Heart left ventricle (tissue), 16 donors: ENCODE measurements at regions of chr3 and their contacts with region 1.

Region 1: GRCh38 chr3:20264934-20265567 is 79.0 kb upstream of the SGO1 start:
- DNase-seq: no peak
- ATAC-seq: no peak
- H3K4me3 ChIP-seq: no peak overlapping the region
- H3K27ac ChIP-seq: no peak overlapping the region
- H3K4me1 ChIP-seq: no peaks in the 10 kb centered on the region
- H3K27me3 ChIP-seq: no peaks in the 10 kb centered on the region
- CTCF ChIP-seq: no peak
- POLR2A ChIP-seq: no peak

Region 2: GRCh38 chr3:20280257-20280656 is 15.2 kb after region 1 on chr3:
- intact Hi-C with region 1: loop called in 1 of 10 experiments (anchors 1 kb)
- DNase-seq: no peak
- ATAC-seq: no peak
- H3K4me3 ChIP-seq: no peak overlapping the region
- H3K27ac ChIP-seq: no peak overlapping the region
- H3K4me1 ChIP-seq: no peaks in the 10 kb centered on the region
- H3K27me3 ChIP-seq: no peaks in the 10 kb centered on the region
- CTCF ChIP-seq: no peak
- POLR2A ChIP-seq: no peak

Region 3: DNA sequence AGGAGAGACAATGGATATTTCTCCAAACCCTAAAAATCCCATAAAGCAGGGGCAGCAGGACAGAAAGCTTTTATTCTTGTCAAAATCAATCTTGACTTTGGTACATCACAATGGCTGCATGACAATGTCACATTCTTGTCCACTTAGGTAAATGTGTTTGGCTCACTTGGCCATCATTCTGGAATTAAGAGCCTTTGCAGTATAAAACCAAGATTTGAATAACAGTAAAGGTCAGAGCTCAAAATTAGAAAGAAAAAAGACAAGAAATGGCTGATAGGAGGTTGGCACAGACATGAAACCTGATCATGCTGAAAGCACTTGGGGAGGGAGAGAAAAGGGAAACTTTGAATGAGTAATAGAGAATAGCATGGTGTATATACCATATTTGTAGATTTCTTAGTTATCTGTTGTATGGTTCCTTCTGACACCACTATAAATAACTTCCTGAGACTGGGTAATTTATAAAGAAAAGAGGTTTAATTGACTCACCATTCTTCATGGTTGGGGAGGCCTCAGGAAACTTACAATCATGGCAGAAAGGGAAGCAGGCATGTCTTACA is 79.4 kb after region 1 on chr3:
- intact Hi-C with region 1: no loop called
- DNase-seq: no peak
- ATAC-seq: no peak
- H3K4me3 ChIP-seq: no peak overlapping the region
- H3K27ac ChIP-seq: no peak overlapping the region
- H3K4me1 ChIP-seq: peaks cover 0 to 4% (median 0%) of the 10 kb centered on the region in 12 donors
- H3K27me3 ChIP-seq: no peaks in the 10 kb centered on the region
- CTCF ChIP-seq: no peak
- POLR2A ChIP-seq: no peak

Region 4: DNA sequence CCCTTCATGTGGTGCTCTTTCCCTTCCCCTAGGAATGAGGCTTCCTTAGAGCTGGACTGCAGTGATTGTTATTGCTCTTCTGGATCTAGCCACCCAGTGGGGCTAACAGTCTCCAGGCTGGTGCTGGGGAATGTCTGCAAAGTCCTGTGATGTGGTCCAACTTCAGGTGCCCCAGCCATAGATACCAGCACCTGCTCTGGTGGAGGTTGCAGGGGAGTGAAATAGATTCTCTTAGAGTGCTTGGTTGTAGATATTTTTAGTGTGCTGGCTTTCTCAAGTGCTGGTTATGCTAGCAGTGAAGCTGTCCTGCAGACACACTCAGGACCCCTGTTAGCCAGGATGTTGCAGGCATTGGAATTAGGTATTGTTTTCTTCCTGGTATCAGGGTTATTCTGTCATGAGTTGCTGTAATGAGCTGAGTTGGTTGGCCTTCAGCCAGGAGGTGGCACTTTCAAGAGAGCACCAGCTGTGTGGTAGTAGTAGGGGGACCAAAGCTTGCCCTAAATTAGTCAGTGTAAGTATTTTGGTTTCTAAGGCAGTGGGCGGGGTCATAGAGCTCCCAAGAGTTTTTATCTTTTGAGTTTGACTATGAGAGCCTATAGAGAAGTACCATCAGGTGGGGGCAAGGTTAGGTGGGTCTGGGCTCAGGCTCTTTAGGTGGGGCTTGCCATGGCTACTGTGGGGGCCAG is 238.5 kb after region 1 on chr3:
- intact Hi-C with region 1: no loop called
- DNase-seq: no peak
- ATAC-seq: no peak
- H3K4me3 ChIP-seq: no peak overlapping the region
- H3K27ac ChIP-seq: no peak overlapping the region
- H3K4me1 ChIP-seq: no peaks in the 10 kb centered on the region
- H3K27me3 ChIP-seq: no peaks in the 10 kb centered on the region
- CTCF ChIP-seq: no peak
- POLR2A ChIP-seq: no peak